ENCODE measurements at regions of chr6 and their contacts with region 1.

Region 1: DNA sequence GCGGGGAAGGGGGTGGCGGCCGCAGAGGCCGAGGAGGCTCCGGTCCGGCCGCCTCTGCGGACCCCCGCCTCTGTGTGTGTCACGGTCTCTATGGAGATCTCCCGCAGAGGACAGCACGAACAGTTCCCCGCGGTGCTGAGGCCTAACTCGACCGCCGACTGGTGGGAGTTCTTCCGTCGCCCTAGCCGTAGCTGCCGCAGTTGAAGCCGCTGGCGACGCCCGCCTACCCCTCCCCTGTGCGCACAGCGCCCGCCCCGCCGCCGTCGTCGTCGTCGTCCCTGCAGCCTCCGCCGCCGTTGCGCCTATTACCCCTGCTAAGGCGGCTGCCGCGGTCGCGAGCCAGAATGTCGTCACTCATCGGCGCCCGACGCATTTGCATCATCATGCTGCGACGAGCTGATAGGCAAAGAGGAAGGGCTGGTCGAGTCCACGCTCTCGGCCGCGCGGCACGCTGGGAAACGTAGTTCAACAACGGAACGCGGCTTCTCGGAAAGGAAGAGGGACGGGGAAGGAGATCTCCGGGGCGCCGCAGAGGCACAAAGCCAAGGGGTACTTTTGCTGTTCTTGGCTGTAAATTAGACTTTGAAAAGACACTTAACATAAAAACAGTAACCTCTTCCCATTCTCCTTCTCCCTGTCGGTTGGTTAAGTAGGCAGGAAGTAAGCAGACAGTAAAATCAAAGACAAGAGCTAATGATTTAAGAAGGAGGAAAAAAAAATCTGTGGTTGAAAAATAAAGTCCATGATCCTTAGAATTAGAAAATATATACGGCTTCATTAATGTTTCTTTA is at the start of gene NUP153:
- DNase-seq: peak; percentile 100
- H3K4me3 Mint-ChIP-seq: peak within 1 kb of the TSS; percentile 90
- H3K27ac Mint-ChIP-seq: peak within 1 kb of the TSS; percentile 95
- H3K4me1 Mint-ChIP-seq: peaks cover 28% of the 10 kb centered on the region
- H3K27me3 Mint-ChIP-seq: peaks cover 2% of the 10 kb centered on the region
- total RNA-seq, gene NUP153: 108 and 109 TPM in 2 replicates

Region 2: DNA sequence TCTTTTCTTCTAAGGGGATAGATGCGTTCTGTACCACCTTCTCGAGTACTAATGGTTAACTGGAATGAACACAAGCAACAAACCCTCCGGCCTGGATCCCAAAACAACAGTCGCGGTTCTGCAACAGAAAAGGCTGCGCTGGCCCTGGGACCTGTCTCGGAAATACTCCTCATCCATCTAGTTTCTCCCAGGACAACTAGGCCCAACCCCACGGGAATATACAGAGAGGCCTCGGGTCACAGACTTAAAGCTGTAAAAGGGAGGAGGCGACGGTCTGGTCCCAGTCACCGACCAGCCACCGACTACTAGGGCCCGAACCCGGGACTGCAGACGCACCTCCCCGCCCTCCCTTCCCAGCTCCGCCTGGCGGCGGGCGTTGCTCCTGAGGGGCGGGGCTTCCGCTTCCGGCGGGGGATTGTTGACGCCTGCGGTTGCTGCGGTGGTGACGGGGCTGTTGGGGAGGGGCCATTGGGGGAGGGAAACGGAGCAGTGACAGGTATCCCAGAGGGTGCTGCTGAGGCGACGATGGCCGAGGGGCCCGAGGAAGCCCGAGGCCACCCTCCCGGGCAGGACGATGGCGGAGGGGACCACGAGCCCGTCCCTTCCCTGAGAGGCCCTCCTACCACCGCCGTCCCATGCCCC is 106.8 kb before region 1 on chr6 and contains the start of gene FAM8A1:
- intact Hi-C with region 1: loop called (anchors 1 kb)
- DNase-seq: peak; percentile 98
- H3K4me3 Mint-ChIP-seq: peak within 1 kb of the TSS; percentile 90
- H3K27ac Mint-ChIP-seq: peak within 1 kb of the TSS; percentile 80
- H3K4me1 Mint-ChIP-seq: peaks cover 30% of the 10 kb centered on the region
- H3K27me3 Mint-ChIP-seq: no peaks in the 10 kb centered on the region
- total RNA-seq, gene FAM8A1: 3.7 and 4.0 TPM in 2 replicates

Region 3: DNA sequence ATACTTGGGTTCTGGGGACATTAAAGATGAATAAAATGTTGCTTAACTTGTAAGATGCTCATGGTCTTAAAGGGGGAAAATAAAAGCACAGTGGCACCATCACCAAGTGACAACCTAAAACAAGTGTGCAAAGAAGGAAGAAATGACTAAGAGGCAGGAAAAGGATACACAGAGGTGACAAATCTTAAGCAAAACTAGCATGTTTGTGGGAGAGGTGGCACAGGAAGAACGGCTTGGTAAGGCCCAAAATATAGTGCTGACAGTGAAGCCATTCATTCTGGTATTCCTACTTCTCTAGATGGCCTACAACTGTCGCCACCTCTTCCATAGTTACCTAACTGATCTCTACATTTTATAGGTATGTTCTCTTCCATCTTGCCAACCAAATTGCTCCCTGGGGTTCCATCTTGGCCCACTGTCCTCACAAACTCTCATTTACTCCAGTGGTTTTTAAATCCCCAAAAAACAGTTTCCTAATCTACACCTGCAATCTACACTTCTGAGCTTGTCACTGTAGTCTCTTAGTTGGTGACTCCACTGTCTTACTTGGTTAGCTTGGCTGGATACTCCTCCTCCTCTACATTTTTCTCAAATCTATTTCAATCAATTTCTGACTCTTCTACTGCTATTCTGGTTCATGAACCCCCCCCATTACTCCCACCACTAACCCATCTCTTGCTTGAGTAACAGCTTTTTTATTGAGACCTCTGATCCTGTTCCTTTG is 73.1 kb before region 1 on chr6:
- intact Hi-C with region 1: loop called (anchors 1 kb)
- DNase-seq: peak; percentile 72
- H3K4me3 Mint-ChIP-seq: peak overlapping the region; percentile 42
- H3K27ac Mint-ChIP-seq: peak overlapping the region; percentile 89
- H3K4me1 Mint-ChIP-seq: peaks cover 43% of the 10 kb centered on the region
- H3K27me3 Mint-ChIP-seq: no peaks in the 10 kb centered on the region

Region 4: DNA sequence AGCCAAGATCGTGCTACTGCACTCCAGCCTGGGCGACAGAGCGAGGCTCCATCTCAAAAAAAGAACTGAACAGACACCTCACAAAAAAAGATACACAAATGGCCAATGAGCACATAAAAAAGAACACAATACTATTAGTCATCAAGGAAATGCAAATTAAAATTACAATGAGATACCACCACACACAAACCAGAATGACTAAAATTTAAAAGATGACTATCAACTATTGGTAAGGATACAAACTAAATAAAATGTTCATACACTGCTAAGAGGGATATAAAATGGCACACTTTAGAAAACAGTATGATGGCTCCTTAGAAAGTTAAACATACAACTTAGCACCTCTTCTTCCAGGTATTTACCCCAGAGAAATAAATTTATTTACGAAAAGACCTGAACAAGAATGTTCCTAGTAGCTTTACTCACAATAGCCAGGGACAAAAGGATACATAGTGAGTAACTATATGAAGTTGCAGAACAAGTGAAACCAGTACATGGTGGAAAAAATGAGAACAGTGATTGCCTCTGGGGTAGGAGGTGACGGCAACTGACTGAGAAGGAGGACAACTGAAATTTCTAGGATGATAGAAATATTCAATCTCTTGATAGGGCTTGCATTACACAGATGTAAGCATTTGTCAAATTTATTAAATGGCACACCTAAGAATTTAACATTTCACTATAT is 53.4 kb before region 1 on chr6:
- intact Hi-C with region 1: loop called (anchors 5 kb)
- DNase-seq: no peak
- H3K4me3 Mint-ChIP-seq: no peak overlapping the region
- H3K27ac Mint-ChIP-seq: peak overlapping the region; percentile 88
- H3K4me1 Mint-ChIP-seq: peaks cover 31% of the 10 kb centered on the region
- H3K27me3 Mint-ChIP-seq: no peaks in the 10 kb centered on the region

Region 5: GRCh38 chr6:18155150-18155863 is 448.5 kb after region 1 on chr6 and contains the start of gene KDM1B:
- intact Hi-C with region 1: loop called (anchors 2 kb)
- DNase-seq: peak; percentile 100
- H3K4me3 Mint-ChIP-seq: peak within 1 kb of the TSS; percentile 97
- H3K27ac Mint-ChIP-seq: peak within 1 kb of the TSS; percentile 92
- H3K4me1 Mint-ChIP-seq: peaks cover 20% of the 10 kb centered on the region
- H3K27me3 Mint-ChIP-seq: peaks cover 4% of the 10 kb centered on the region
- total RNA-seq, gene KDM1B: 8.5 and 8.6 TPM in 2 replicates